ENCODE measurements at regions of chrX and their contacts with region 1.

Region 1: GRCh38 chrX:139126493-139126892 is 404.0 kb upstream of the F9 start:
- DNase-seq: peak; percentile 60 to 72 (median 68)
- ATAC-seq: peak; percentile 100
- H3K4me3 ChIP-seq: no peak overlapping the region
- H3K27ac ChIP-seq: no peak overlapping the region
- H3K4me1 ChIP-seq: no peaks in the 10 kb centered on the region
- H3K27me3 ChIP-seq: no peaks in the 10 kb centered on the region
- CTCF ChIP-seq: peak; percentile 83 to 98 (median 94)
- EP300 ChIP-seq: no peak
- POLR2A ChIP-seq: no peak
- RAD21 ChIP-seq: peak; percentile 79 to 85

Region 2: GRCh38 chrX:139158261-139158845 is 31.9 kb after region 1 on chrX:
- CTCF ChIA-PET with region 1: no interaction called
- POLR2A ChIA-PET with region 1: no interaction called
- in situ Hi-C with region 1: no loop called
- intact Hi-C with region 1: no loop called
- DNase-seq: peak in 1 of 4 experiments; percentile 16
- ATAC-seq: no peak
- H3K4me3 ChIP-seq: no peak overlapping the region
- H3K27ac ChIP-seq: no peak overlapping the region
- H3K4me1 ChIP-seq: no peaks in the 10 kb centered on the region
- H3K27me3 ChIP-seq: no peaks in the 10 kb centered on the region
- CTCF ChIP-seq: no peak
- EP300 ChIP-seq: no peak
- POLR2A ChIP-seq: no peak
- RAD21 ChIP-seq: no peak

Region 3: GRCh38 chrX:139204898-139205667 is 78.6 kb after region 1 on chrX:
- CTCF ChIA-PET with region 1: no interaction called
- POLR2A ChIA-PET with region 1: no interaction called
- in situ Hi-C with region 1: no loop called
- intact Hi-C with region 1: loop called (anchors 5 kb)
- DNase-seq: peak; percentile 51 to 66 (median 60)
- ATAC-seq: peak; percentile 68
- H3K4me3 ChIP-seq: peak overlapping the region; percentile 45
- H3K27ac ChIP-seq: peak overlapping the region; percentile 70
- H3K4me1 ChIP-seq: peaks cover 36 to 45% of the 10 kb centered on the region in 2 experiments; a peak in 4 of 5 replicates
- H3K27me3 ChIP-seq: no peaks in the 10 kb centered on the region
- CTCF ChIP-seq: 0 out of 6 replicates have a peak, but pooled peaks of 2 of the 3 experiments have one; percentile 0 to 11
- EP300 ChIP-seq: no peak
- POLR2A ChIP-seq: peak; percentile 70
- RAD21 ChIP-seq: no peak

Region 4: GRCh38 chrX:139324756-139325155 is 198.3 kb after region 1 on chrX:
- CTCF ChIA-PET with region 1: no interaction called
- POLR2A ChIA-PET with region 1: no interaction called
- in situ Hi-C with region 1: no loop called
- intact Hi-C with region 1: loop called (anchors 5 kb)
- DNase-seq: no peak
- ATAC-seq: no peak
- H3K4me3 ChIP-seq: no peak overlapping the region
- H3K27ac ChIP-seq: no peak overlapping the region
- H3K4me1 ChIP-seq: no peaks in the 10 kb centered on the region
- H3K27me3 ChIP-seq: no peaks in the 10 kb centered on the region; a peak in 1 of 5 replicates
- CTCF ChIP-seq: no peak
- EP300 ChIP-seq: no peak
- POLR2A ChIP-seq: no peak
- RAD21 ChIP-seq: no peak

Region 5: DNA sequence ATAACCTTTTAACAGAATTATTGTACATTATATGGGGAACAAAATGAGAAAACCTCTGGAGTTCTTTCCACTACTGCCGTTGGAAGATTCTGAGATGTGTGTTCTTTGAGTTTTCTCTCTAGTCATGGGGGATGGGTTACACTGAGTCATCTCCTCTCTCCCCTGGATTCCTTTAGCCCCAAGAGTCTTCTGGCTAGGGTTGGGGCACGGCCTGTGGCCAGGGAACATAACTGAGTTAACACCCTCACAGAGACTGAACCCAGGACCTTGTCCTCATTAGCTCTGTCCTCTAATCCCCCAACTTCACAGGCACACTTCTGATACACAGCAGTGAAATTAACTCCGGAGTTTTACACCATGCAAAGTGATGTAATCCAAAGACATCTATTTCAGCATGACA is 261.8 kb after region 1 on chrX:
- CTCF ChIA-PET with region 1: no interaction called
- POLR2A ChIA-PET with region 1: interaction called, 3 read pairs
- in situ Hi-C with region 1: no loop called
- intact Hi-C with region 1: loop called (anchors 10 kb)
- DNase-seq: peak in 1 of 4 experiments; percentile 3
- ATAC-seq: peak; percentile 61
- H3K4me3 ChIP-seq: no peak overlapping the region
- H3K27ac ChIP-seq: no peak overlapping the region
- H3K4me1 ChIP-seq: no peaks in the 10 kb centered on the region
- H3K27me3 ChIP-seq: no peaks in the 10 kb centered on the region
- CTCF ChIP-seq: no peak
- EP300 ChIP-seq: no peak
- POLR2A ChIP-seq: no peak
- RAD21 ChIP-seq: no peak

Region 6: DNA sequence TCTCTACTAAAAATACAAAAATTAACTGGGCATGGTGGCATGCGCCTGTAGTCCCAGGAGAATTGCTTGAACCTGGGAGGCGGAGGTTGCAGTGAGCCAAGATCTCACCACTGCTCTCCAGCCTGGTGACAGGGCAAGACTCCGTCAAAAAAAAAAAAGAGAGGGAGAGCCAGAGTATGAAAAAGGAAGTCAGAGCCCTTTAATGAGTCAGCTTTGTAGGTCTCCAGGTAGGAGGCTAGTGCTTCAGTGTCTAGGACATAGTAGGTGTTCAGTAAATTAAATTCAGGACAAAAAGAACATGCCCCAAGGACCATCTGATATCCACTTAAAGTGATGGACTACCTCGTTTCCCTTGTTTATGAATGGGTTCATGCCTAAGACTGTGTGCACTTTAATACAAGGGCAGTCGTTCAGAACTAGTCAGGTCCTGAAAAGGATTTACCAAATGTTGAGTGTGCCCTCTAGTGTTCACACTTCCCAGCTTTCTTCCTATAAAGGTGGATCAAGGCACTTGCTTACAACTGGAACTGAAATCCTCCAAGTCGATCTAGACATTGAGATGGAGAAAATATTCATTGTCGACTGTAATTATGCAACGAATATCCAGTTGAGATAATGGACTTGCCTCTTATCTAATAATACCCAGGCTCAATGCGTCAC is 433.0 kb after region 1 on chrX:
- CTCF ChIA-PET with region 1: no interaction called
- POLR2A ChIA-PET with region 1: no interaction called
- in situ Hi-C with region 1: no loop called
- intact Hi-C with region 1: loop called (anchors 1 kb)
- DNase-seq: peak; percentile 4 to 64 (median 18)
- ATAC-seq: peak; percentile 88
- H3K4me3 ChIP-seq: no peak overlapping the region
- H3K27ac ChIP-seq: no peak overlapping the region
- H3K4me1 ChIP-seq: no peaks in the 10 kb centered on the region
- H3K27me3 ChIP-seq: peaks cover 2 to 17% of the 10 kb centered on the region in 2 experiments; a peak in 3 of 5 replicates
- CTCF ChIP-seq: peak; percentile 42 to 66 (median 57); a peak in 5 of 6 replicates
- EP300 ChIP-seq: no peak
- POLR2A ChIP-seq: no peak
- RAD21 ChIP-seq: peak; percentile 66 to 78